ENCODE measurements at regions of chr11 and their contacts with region 1.

Region 1: GRCh38 chr11:72430741-72431570 is 3.4 kb downstream of the CLPB start:
- DNase-seq: no peak
- ATAC-seq: no peak
- H3K4me3 Mint-ChIP-seq: no peak overlapping the region
- H3K27ac Mint-ChIP-seq: no peak overlapping the region
- H3K4me1 Mint-ChIP-seq: peaks cover 36% of the 10 kb centered on the region
- H3K27me3 Mint-ChIP-seq: no peaks in the 10 kb centered on the region
- CTCF ChIP-seq: no peak

Region 2: GRCh38 chr11:71977743-71978418 is 453.1 kb before region 1 on chr11:
- CTCF ChIA-PET with region 1: interaction called, 5 read pairs
- POLR2A ChIA-PET with region 1: no interaction called
- intact Hi-C with region 1: loop called (anchors 5 kb)
- DNase-seq: no peak
- ATAC-seq: peak; percentile 96
- H3K4me3 Mint-ChIP-seq: no peak overlapping the region
- H3K27ac Mint-ChIP-seq: peak overlapping the region; percentile 91
- H3K4me1 Mint-ChIP-seq: peaks cover 16% of the 10 kb centered on the region
- H3K27me3 Mint-ChIP-seq: no peaks in the 10 kb centered on the region
- CTCF ChIP-seq: peak; percentile 26

Region 3: DNA sequence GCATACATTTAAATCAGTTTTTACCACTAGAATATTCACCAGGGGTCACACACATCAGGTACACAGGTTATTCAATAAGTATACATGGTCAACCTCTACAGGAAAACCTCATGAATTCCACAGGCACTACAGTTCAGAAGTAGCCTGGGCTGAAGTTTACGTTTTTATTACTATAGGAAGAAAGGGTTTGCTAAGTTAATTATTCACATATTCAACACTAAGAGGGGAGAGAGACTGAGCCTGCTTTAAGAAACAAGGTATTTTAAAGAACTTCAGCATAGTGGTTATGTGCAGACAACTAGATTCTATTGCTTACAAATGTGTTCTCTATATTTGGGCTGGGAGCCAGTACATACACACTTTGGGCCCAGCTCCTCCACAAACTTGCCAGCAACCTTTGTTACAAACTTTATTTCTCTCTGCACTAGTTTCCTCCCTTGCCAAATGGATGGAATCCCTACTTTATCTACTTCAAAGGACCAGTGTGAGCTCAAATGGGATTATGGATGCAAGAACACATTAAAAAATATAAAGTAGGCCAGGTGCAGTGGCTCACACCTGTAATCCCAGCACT is 400.4 kb before region 1 on chr11:
- CTCF ChIA-PET with region 1: interaction called, 18 read pairs
- POLR2A ChIA-PET with region 1: no interaction called
- intact Hi-C with region 1: loop called (anchors 1 kb)
- DNase-seq: no peak
- ATAC-seq: no peak
- H3K4me3 Mint-ChIP-seq: no peak overlapping the region
- H3K27ac Mint-ChIP-seq: peak overlapping the region; percentile 41
- H3K4me1 Mint-ChIP-seq: peaks cover 22% of the 10 kb centered on the region
- H3K27me3 Mint-ChIP-seq: no peaks in the 10 kb centered on the region
- CTCF ChIP-seq: no peak

Region 4: GRCh38 chr11:72141066-72141465 is 289.9 kb before region 1 on chr11:
- CTCF ChIA-PET with region 1: interaction called, 9 read pairs
- POLR2A ChIA-PET with region 1: interaction called, 5 read pairs
- intact Hi-C with region 1: loop called (anchors 5 kb)
- DNase-seq: no peak
- ATAC-seq: no peak
- H3K4me3 Mint-ChIP-seq: no peak overlapping the region
- H3K27ac Mint-ChIP-seq: no peak overlapping the region
- H3K4me1 Mint-ChIP-seq: peaks cover 1% of the 10 kb centered on the region
- H3K27me3 Mint-ChIP-seq: peaks cover 17% of the 10 kb centered on the region
- CTCF ChIP-seq: no peak

Region 5: GRCh38 chr11:72293910-72294615 is 136.9 kb before region 1 on chr11:
- CTCF ChIA-PET with region 1: interaction called, 12 read pairs
- POLR2A ChIA-PET with region 1: no interaction called
- intact Hi-C with region 1: loop called (anchors 1 kb)
- DNase-seq: no peak
- ATAC-seq: no peak
- H3K4me3 Mint-ChIP-seq: no peak overlapping the region
- H3K27ac Mint-ChIP-seq: no peak overlapping the region
- H3K4me1 Mint-ChIP-seq: peaks cover 17% of the 10 kb centered on the region
- H3K27me3 Mint-ChIP-seq: no peaks in the 10 kb centered on the region
- CTCF ChIP-seq: no peak

Region 6: GRCh38 chr11:72378704-72379384 is 52.1 kb before region 1 on chr11:
- CTCF ChIA-PET with region 1: no interaction called
- POLR2A ChIA-PET with region 1: no interaction called
- intact Hi-C with region 1: no loop called
- DNase-seq: no peak
- ATAC-seq: no peak
- H3K4me3 Mint-ChIP-seq: no peak overlapping the region
- H3K27ac Mint-ChIP-seq: no peak overlapping the region
- H3K4me1 Mint-ChIP-seq: no peaks in the 10 kb centered on the region
- H3K27me3 Mint-ChIP-seq: no peaks in the 10 kb centered on the region
- CTCF ChIP-seq: no peak

Region 7: GRCh38 chr11:72446902-72447769 is 16.2 kb after region 1 on chr11:
- CTCF ChIA-PET with region 1: interaction called, 9 read pairs
- POLR2A ChIA-PET with region 1: no interaction called
- intact Hi-C with region 1: loop called (anchors 1 kb)
- DNase-seq: no peak
- ATAC-seq: peak; percentile 69
- H3K4me3 Mint-ChIP-seq: no peak overlapping the region
- H3K27ac Mint-ChIP-seq: no peak overlapping the region
- H3K4me1 Mint-ChIP-seq: no peaks in the 10 kb centered on the region
- H3K27me3 Mint-ChIP-seq: peaks cover 9% of the 10 kb centered on the region
- CTCF ChIP-seq: no peak

Region 8: GRCh38 chr11:72511393-72512047 is 80.6 kb after region 1 on chr11:
- CTCF ChIA-PET with region 1: no interaction called
- POLR2A ChIA-PET with region 1: no interaction called
- intact Hi-C with region 1: no loop called
- DNase-seq: no peak
- ATAC-seq: no peak
- H3K4me3 Mint-ChIP-seq: no peak overlapping the region
- H3K27ac Mint-ChIP-seq: no peak overlapping the region
- H3K4me1 Mint-ChIP-seq: no peaks in the 10 kb centered on the region
- H3K27me3 Mint-ChIP-seq: peaks cover 23% of the 10 kb centered on the region
- CTCF ChIP-seq: no peak

Measured in activated B cell treated with CpG ODN at 0.5 μM for 24 hours (primary cell).